ENCODE measurements at regions of chr11 and their contacts with region 1.

Region 1: GRCh38 chr11:59171508-59172322 is at the start of gene DTX4:
- DNase-seq: peak; percentile 94
- H3K4me3 Mint-ChIP-seq: peak within 1 kb of the TSS; percentile 68
- H3K27ac Mint-ChIP-seq: no peak within 1 kb of the TSS
- H3K4me1 Mint-ChIP-seq: peaks cover 13% of the 10 kb centered on the region
- H3K27me3 Mint-ChIP-seq: peaks cover 15% of the 10 kb centered on the region
- total RNA-seq, gene DTX4: 0.07 to 0.14 TPM

Region 2: GRCh38 chr11:59186130-59186594 is 14.4 kb after region 1 on chr11:
- CTCF ChIA-PET with region 1: interaction called, 47 read pairs
- intact Hi-C with region 1: loop called (anchors 1 kb)
- DNase-seq: peak; percentile 60
- H3K4me3 Mint-ChIP-seq: no peak overlapping the region
- H3K27ac Mint-ChIP-seq: no peak overlapping the region
- H3K4me1 Mint-ChIP-seq: no peaks in the 10 kb centered on the region
- H3K27me3 Mint-ChIP-seq: no peaks in the 10 kb centered on the region

Region 3: DNA sequence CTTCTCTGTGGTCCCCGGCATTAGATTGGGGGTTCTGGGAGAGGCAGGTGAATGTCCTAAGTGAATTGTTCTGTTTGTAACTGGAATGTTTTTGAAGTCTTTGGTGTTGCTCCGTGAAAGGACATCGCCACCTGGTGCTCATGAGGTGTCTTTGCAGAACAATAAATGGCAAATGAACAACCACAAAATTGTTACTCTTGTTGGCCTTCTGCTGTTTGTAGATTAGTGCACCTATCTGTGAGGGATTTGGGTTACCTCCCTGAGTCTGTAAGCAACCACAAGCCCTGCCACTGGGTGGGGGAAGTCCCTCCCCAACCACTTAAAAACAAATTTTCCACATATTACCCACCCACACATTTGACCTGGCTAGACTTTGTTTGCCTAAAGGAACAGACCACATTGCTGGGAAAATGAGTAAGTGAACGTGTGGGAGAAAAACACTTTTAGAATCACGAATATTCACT is 36.3 kb after region 1 on chr11:
- CTCF ChIA-PET with region 1: interaction called, 67 read pairs
- intact Hi-C with region 1: loop called (anchors 1 kb)
- DNase-seq: peak; percentile 53
- H3K4me3 Mint-ChIP-seq: no peak overlapping the region
- H3K27ac Mint-ChIP-seq: no peak overlapping the region
- H3K4me1 Mint-ChIP-seq: peaks cover 35% of the 10 kb centered on the region
- H3K27me3 Mint-ChIP-seq: peaks cover 26% of the 10 kb centered on the region

Region 4: DNA sequence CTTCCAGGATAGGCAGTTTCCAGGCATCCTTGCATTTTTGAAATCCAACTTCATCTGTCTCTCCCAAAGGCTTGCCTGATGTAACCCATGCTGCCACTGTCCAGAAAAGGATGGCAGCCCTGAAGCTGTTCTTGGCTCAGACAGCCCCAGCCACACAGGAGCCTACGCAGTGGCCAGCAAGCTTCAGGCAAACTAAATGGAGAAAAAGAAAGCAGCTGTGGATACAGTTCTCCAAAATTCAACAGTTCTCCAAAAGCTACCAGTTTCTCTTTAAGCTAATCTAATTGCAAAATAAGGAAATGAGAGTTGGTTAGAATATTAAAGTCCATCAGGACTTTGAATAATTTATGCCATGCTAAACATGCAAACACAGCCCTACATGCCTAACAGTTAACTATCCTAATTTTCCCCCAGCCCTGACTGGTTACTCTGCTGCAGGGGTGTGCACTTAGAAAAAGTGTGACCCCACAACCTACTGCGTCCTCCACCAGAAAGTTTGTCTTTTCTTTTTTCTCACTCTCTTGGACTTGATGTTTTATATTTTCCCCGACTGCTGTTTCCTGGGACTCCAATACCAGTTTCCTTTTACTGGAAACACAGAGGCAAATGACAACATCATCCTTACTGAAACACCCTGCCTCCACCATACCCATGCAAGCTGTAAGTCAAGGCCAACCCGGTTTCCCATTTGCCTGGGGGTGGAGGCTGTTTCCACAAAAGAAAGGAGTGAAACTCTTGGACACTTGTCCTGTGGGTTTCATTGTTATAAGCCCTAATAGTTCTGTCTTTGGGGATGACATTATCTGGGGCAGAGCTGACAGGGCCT is 117.9 kb after region 1 on chr11:
- CTCF ChIA-PET with region 1: interaction called, 12 read pairs
- intact Hi-C with region 1: loop called (anchors 1 kb)
- DNase-seq: no peak
- H3K4me3 Mint-ChIP-seq: no peak overlapping the region
- H3K27ac Mint-ChIP-seq: no peak overlapping the region
- H3K4me1 Mint-ChIP-seq: peaks cover 2% of the 10 kb centered on the region
- H3K27me3 Mint-ChIP-seq: peaks cover 9% of the 10 kb centered on the region

Region 5: GRCh38 chr11:59436169-59436568 is 264.5 kb after region 1 on chr11 and contains the start of gene OR5A1:
- CTCF ChIA-PET with region 1: interaction called, 11 read pairs
- intact Hi-C with region 1: no loop called
- DNase-seq: no peak
- H3K4me3 Mint-ChIP-seq: no peak within 1 kb of the TSS
- H3K27ac Mint-ChIP-seq: no peak within 1 kb of the TSS
- H3K4me1 Mint-ChIP-seq: no peaks in the 10 kb centered on the region
- H3K27me3 Mint-ChIP-seq: no peaks in the 10 kb centered on the region
- total RNA-seq, gene OR5A1: not detected

Measured in activated naive CD4-positive, alpha-beta T cell treated with anti-CD3 and anti-CD28 coated beads for 36 hours (primary cell).